ENCODE measurements at regions of chr15 and their contacts with region 1.

Region 1: GRCh38 chr15:81274931-81275707 is 48.8 kb downstream of the STARD5 start:
- DNase-seq: peak; percentile 71 to 84 (median 74)
- H3K4me3 ChIP-seq: no peak overlapping the region
- H3K4me3 Mint-ChIP-seq: peak overlapping the region in 4 of 7 donors; percentile 40 to 65 (median 50)
- H3K27ac ChIP-seq: no peak overlapping the region
- H3K27ac Mint-ChIP-seq: peak overlapping the region in 7 of 8 donors; percentile 1 to 91 (median 77)
- H3K4me1 ChIP-seq: peaks cover 21% of the 10 kb centered on the region
- H3K4me1 Mint-ChIP-seq: peaks cover 20 to 26% (median 26%) of the 10 kb centered on the region in 3 donors
- H3K27me3 ChIP-seq: no peaks in the 10 kb centered on the region
- H3K27me3 Mint-ChIP-seq: peaks cover 0 to 1% of the 10 kb centered on the region in 2 donors

Region 2: DNA sequence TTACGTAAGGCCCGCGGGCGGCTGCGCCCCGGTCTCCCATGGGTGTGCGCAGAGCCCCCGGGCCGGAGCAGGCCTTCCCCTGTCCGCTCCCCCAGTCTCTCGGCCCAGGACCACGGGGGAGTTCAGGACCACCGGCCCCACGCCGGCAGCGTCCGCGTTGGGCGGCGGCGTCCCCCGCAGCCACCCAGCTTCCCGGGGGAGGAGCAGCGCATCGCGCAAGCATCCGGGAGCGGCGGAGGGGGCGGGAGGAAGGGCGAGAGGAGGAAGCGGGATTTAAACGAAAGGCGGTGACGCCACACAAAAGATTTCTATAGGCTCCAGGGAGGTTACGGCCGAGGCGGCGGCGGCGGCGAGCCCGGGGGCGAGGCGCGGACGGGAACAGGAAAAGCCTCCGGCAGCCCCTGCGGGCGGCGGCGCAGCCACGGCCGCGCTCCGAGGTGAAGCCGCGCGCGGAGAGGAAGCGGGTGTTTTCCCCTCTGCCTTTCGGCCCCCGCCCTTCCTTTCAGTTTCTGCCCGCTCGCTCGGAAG is 274.4 kb before region 1 on chr15 and contains the start of gene TLNRD1:
- CTCF ChIA-PET with region 1: no interaction called
- POLR2A ChIA-PET with region 1: no interaction called
- DNase-seq: peak; percentile 72 to 88 (median 82)
- H3K4me3 ChIP-seq: peak within 1 kb of the TSS; percentile 96
- H3K4me3 Mint-ChIP-seq: peak within 1 kb of the TSS; percentile 93 to 99 (median 98)
- H3K27ac ChIP-seq: peak within 1 kb of the TSS; percentile 93
- H3K27ac Mint-ChIP-seq: peak within 1 kb of the TSS; percentile 92 to 99 (median 99)
- H3K4me1 ChIP-seq: peaks cover 46% of the 10 kb centered on the region
- H3K4me1 Mint-ChIP-seq: peaks cover 44 to 52% (median 50%) of the 10 kb centered on the region in 3 donors
- H3K27me3 ChIP-seq: no peaks in the 10 kb centered on the region
- H3K27me3 Mint-ChIP-seq: no peaks in the 10 kb centered on the region
- total RNA-seq, gene TLNRD1: 35.9 to 38.6 TPM

Region 3: GRCh38 chr15:81296673-81297072 is 21.6 kb after region 1 on chr15:
- CTCF ChIA-PET with region 1: interaction called, 31 read pairs
- POLR2A ChIA-PET with region 1: interaction called, 4 read pairs
- DNase-seq: peak; percentile 53 to 85 (median 83)
- H3K4me3 ChIP-seq: peak overlapping the region; percentile 89
- H3K4me3 Mint-ChIP-seq: peak overlapping the region; percentile 96 to 100 (median 99)
- H3K27ac ChIP-seq: peak overlapping the region; percentile 61
- H3K27ac Mint-ChIP-seq: peak overlapping the region; percentile 91 to 100 (median 98)
- H3K4me1 ChIP-seq: peaks cover 59% of the 10 kb centered on the region
- H3K4me1 Mint-ChIP-seq: peaks cover 65 to 66% (median 65%) of the 10 kb centered on the region in 3 donors
- H3K27me3 ChIP-seq: no peaks in the 10 kb centered on the region
- H3K27me3 Mint-ChIP-seq: peaks cover 0 to 2% of the 10 kb centered on the region in 2 donors

Region 4: DNA sequence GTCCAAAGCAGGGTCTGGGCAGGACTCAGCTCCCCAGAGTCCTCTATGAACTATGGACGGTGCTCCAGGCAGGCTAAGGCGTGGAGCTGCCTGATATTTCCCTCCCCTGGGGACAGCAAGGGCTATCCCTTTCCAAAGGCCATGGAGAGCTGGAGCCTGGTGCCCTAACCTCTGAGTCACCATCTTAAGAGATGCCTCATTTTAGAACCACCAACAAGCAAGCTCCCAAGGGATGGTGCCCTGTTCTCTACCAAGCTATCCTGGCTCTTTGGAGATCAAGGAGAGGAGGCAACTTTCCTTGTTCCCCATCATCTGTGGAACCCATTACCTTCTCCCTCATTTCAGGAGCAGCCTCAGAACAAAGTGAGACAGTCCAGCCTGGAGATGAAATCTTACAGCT is 33.1 kb after region 1 on chr15:
- CTCF ChIA-PET with region 1: interaction called, 31 read pairs
- POLR2A ChIA-PET with region 1: interaction called, 3 read pairs
- DNase-seq: no peak
- H3K4me3 ChIP-seq: no peak overlapping the region
- H3K4me3 Mint-ChIP-seq: no peak overlapping the region
- H3K27ac ChIP-seq: no peak overlapping the region
- H3K27ac Mint-ChIP-seq: peak overlapping the region in 7 of 8 donors; percentile 26 to 100 (median 74)
- H3K4me1 ChIP-seq: peaks cover 64% of the 10 kb centered on the region
- H3K4me1 Mint-ChIP-seq: peaks cover 75 to 99% (median 91%) of the 10 kb centered on the region in 3 donors
- H3K27me3 ChIP-seq: no peaks in the 10 kb centered on the region
- H3K27me3 Mint-ChIP-seq: no peaks in the 10 kb centered on the region

Region 5: GRCh38 chr15:81330366-81331090 is 55.4 kb after region 1 on chr15:
- CTCF ChIA-PET with region 1: interaction called, 46 read pairs
- POLR2A ChIA-PET with region 1: no interaction called
- DNase-seq: no peak
- H3K4me3 ChIP-seq: no peak overlapping the region
- H3K4me3 Mint-ChIP-seq: no peak overlapping the region
- H3K27ac ChIP-seq: no peak overlapping the region
- H3K27ac Mint-ChIP-seq: peak overlapping the region in 1 of 8 donors; percentile 47
- H3K4me1 ChIP-seq: peaks cover 9% of the 10 kb centered on the region
- H3K4me1 Mint-ChIP-seq: no peaks in the 10 kb centered on the region
- H3K27me3 ChIP-seq: no peaks in the 10 kb centered on the region
- H3K27me3 Mint-ChIP-seq: no peaks in the 10 kb centered on the region

Region 6: GRCh38 chr15:81394603-81395002 is 119.5 kb after region 1 on chr15:
- CTCF ChIA-PET with region 1: interaction called, 67 read pairs
- POLR2A ChIA-PET with region 1: no interaction called
- DNase-seq: no peak
- H3K4me3 ChIP-seq: no peak overlapping the region
- H3K4me3 Mint-ChIP-seq: no peak overlapping the region
- H3K27ac ChIP-seq: no peak overlapping the region
- H3K27ac Mint-ChIP-seq: no peak overlapping the region
- H3K4me1 ChIP-seq: no peaks in the 10 kb centered on the region
- H3K4me1 Mint-ChIP-seq: no peaks in the 10 kb centered on the region
- H3K27me3 ChIP-seq: no peaks in the 10 kb centered on the region
- H3K27me3 Mint-ChIP-seq: peaks cover 0 to 1% of the 10 kb centered on the region in 2 donors

Region 7: GRCh38 chr15:82262422-82263026 is 987.4 kb after region 1 on chr15 and contains the starts of genes EFL1 and SAXO2:
- CTCF ChIA-PET with region 1: no interaction called
- POLR2A ChIA-PET with region 1: no interaction called
- DNase-seq: peak; percentile 86 to 95 (median 90)
- H3K4me3 ChIP-seq: peak within 1 kb of the TSS; percentile 78
- H3K4me3 Mint-ChIP-seq: peak within 1 kb of the TSS; percentile 89 to 97 (median 94)
- H3K27ac ChIP-seq: peak within 1 kb of the TSS; percentile 64
- H3K27ac Mint-ChIP-seq: peak within 1 kb of the TSS; percentile 90 to 98 (median 94)
- H3K4me1 ChIP-seq: peaks cover 19% of the 10 kb centered on the region
- H3K4me1 Mint-ChIP-seq: peaks cover 24 to 39% (median 32%) of the 10 kb centered on the region in 3 donors
- H3K27me3 ChIP-seq: no peaks in the 10 kb centered on the region
- H3K27me3 Mint-ChIP-seq: no peaks in the 10 kb centered on the region
- total RNA-seq, gene EFL1: 22.1 to 22.2 TPM
- total RNA-seq, gene SAXO2: 0.97 to 1.6 TPM